GM12878 (cell line): ENCODE measurements at regions of chr11 and their contacts with region 1.

Region 1: GRCh38 chr11:70191495-70192140 is 11.5 kb upstream of the FADD start:
- DNase-seq: no peak
- ATAC-seq: peak; percentile 96
- H3K4me3 ChIP-seq: no peak overlapping the region
- H3K27ac ChIP-seq: no peak overlapping the region
- H3K4me1 ChIP-seq: no peaks in the 10 kb centered on the region
- H3K27me3 ChIP-seq: no peaks in the 10 kb centered on the region
- CTCF ChIP-seq: peak; percentile 61 to 83 (median 79)
- EP300 ChIP-seq: no peak
- POLR2A ChIP-seq: no peak
- RAD21 ChIP-seq: peak; percentile 85

Region 2: GRCh38 chr11:69909561-69910496 is 281.8 kb before region 1 on chr11:
- CTCF ChIA-PET with region 1: interaction called, 7 read pairs
- POLR2A ChIA-PET with region 1: no interaction called
- RAD21 ChIA-PET with region 1: interaction called, 4 read pairs
- SMC1A ChIA-PET with region 1: no interaction called
- in situ Hi-C with region 1: loop called (anchors 5 kb)
- intact Hi-C with region 1: no loop called
- DNase-seq: no peak
- ATAC-seq: peak; percentile 55
- H3K4me3 ChIP-seq: no peak overlapping the region
- H3K27ac ChIP-seq: no peak overlapping the region
- H3K4me1 ChIP-seq: no peaks in the 10 kb centered on the region
- H3K27me3 ChIP-seq: no peaks in the 10 kb centered on the region; a peak in 1 of 4 replicates
- CTCF ChIP-seq: peak; percentile 48 to 61 (median 60); a peak in 5 of 6 replicates
- EP300 ChIP-seq: no peak
- POLR2A ChIP-seq: no peak
- RAD21 ChIP-seq: peak; percentile 23; the same call in 1 of the 2 replicates

Region 3: GRCh38 chr11:69918938-69919650 is 272.5 kb before region 1 on chr11:
- CTCF ChIA-PET with region 1: interaction called, 7 read pairs
- POLR2A ChIA-PET with region 1: no interaction called
- RAD21 ChIA-PET with region 1: no interaction called
- SMC1A ChIA-PET with region 1: no interaction called
- in situ Hi-C with region 1: loop called (anchors 5 kb)
- intact Hi-C with region 1: loop called (anchors 1 kb)
- DNase-seq: no peak
- ATAC-seq: peak; percentile 91
- H3K4me3 ChIP-seq: no peak overlapping the region
- H3K27ac ChIP-seq: no peak overlapping the region
- H3K4me1 ChIP-seq: no peaks in the 10 kb centered on the region
- H3K27me3 ChIP-seq: no peaks in the 10 kb centered on the region; a peak in 1 of 4 replicates
- CTCF ChIP-seq: peak; percentile 71 to 88 (median 72)
- EP300 ChIP-seq: no peak
- POLR2A ChIP-seq: no peak
- RAD21 ChIP-seq: peak; percentile 62

Region 4: DNA sequence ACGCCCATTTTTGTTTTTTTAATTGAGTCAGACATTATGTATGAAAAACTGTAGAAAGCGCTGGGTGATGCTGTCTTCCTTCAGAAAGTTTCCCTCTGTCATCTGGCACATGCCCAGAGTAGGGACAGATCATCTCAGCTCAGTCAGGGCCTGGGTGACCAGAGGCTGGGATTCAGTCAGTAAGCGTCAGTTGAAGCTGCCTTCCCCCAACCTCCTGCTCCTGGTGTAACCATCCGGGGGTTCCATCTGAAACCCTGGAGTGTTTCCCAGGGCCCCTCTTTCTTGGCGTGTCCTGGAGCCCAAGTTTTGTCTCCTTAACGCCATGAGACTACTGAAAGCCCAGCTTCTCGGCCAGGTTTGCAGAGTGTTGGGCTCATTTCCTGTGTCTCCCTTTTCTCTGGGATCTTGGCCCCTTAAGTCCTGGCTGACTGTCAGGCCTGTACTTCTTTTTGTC is 89.6 kb after region 1 on chr11:
- CTCF ChIA-PET with region 1: no interaction called
- POLR2A ChIA-PET with region 1: no interaction called
- RAD21 ChIA-PET with region 1: no interaction called
- SMC1A ChIA-PET with region 1: no interaction called
- in situ Hi-C with region 1: no loop called
- intact Hi-C with region 1: no loop called
- DNase-seq: no peak
- ATAC-seq: no peak
- H3K4me3 ChIP-seq: no peak overlapping the region
- H3K27ac ChIP-seq: no peak overlapping the region
- H3K4me1 ChIP-seq: peaks cover 14% of the 10 kb centered on the region
- H3K27me3 ChIP-seq: no peaks in the 10 kb centered on the region
- CTCF ChIP-seq: no peak
- EP300 ChIP-seq: no peak
- POLR2A ChIP-seq: no peak
- RAD21 ChIP-seq: no peak